Activated naive CD4-positive, alpha-beta T cell treated with anti-CD3 and anti-CD28 coated beads, Interleukin-2, amount 10 ng/mL, durations not matched to agents 7 days and 5 days (primary cell): ENCODE measurements at regions of chr15 and their contacts with region 1.

Region 1: GRCh38 chr15:48352474-48353072 is 21.3 kb downstream of the DUT start:
- DNase-seq: peak; percentile 71
- H3K4me3 Mint-ChIP-seq: no peak overlapping the region
- H3K27ac Mint-ChIP-seq: no peak overlapping the region
- H3K4me1 Mint-ChIP-seq: peaks cover 2% of the 10 kb centered on the region
- H3K27me3 Mint-ChIP-seq: peaks cover 8% of the 10 kb centered on the region

Region 2: DNA sequence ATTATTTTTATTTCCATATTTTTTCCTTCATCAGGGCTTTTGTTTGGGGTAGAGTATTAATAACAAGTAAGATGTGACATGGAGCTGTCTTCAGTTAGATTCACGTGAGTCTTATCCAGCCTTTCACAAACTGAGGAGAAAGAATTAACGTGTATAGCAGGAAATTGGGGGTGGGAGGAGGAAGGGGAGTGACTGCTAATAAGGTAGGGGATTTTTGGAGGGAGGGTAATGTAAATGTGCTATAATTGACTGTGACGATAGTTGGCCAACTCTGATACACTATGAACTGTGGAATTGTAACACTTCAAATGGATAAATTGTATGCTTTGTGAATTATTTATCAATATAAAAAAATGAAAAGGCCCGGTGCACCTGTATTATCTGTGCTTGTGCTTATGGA is 12.5 kb before region 1 on chr15:
- CTCF ChIA-PET with region 1: interaction called, 13 read pairs
- DNase-seq: no peak
- H3K4me3 Mint-ChIP-seq: no peak overlapping the region
- H3K27ac Mint-ChIP-seq: no peak overlapping the region
- H3K4me1 Mint-ChIP-seq: peaks cover 32% of the 10 kb centered on the region
- H3K27me3 Mint-ChIP-seq: no peaks in the 10 kb centered on the region